Left cardiac atrium (tissue), 4 donors: ENCODE measurements at regions of chr2 and their contacts with region 1.

Region 1: DNA sequence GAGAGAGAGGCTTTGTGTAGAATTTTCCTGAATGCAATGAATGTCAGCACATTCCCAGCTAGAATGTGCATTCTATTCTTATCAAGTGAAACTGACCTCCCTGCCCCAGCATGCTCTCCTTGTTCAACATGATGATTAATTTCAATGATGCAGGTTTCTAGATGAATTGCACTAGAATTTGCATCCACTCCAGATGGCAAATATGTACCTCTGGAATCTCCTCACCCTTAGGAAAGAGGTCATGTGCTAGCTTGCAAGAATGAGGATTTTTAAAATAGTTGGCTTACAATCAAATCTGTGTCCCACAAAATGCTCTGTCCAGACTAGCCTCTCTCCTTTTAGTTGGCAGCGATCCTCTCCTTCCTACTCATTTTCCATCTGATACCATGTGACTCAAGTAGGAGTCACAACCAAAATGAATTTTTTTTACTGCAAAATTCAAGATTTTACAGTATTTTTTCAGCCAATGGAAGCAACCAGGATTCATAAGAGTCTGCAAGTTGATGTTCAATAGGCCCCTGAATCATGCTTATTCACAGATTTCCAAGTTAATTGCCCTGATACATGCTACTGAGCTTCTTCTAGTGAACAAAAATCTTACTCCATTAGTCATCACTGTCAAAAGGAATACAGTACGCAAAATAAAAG is 21.0 kb upstream of the STAT4 start:
- DNase-seq: no peak
- ATAC-seq: peak; percentile 51 to 83

Region 2: GRCh38 chr2:191051825-191052778 is 119.7 kb before region 1 on chr2:
- intact Hi-C with region 1: no loop called
- DNase-seq: no peak
- ATAC-seq: peak in 1 of 2 donors; percentile 22

Region 3: GRCh38 chr2:191213333-191213732 is 41.5 kb after region 1 on chr2:
- intact Hi-C with region 1: loop called in 1 of 2 experiments (anchors 5 kb)
- DNase-seq: no peak
- ATAC-seq: no peak

Region 4: DNA sequence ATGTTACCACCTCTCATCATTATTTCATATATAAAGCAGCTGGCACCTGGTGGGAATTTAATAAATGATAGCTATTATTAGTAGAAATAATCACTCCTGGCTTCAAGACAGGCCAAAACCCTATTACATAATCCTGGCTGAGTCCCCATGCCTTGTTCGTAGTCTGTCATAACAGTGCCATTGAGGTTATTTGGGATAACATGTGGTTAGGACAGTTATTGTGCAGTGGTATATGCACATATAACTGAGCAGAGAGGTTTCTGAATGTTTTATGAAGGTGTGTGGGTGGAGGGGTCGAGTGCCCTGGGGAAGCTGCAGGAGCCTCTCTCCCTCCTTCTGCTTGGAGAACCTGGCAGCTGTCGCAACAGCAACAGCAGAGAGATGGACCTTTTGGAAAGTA is 343.7 kb after region 1 on chr2:
- intact Hi-C with region 1: loop called (anchors 5 kb)
- DNase-seq: no peak
- ATAC-seq: peak in 1 of 2 donors; percentile 55